ENCODE measurements at regions of chr6 and their contacts with region 1.

Region 1: GRCh38 chr6:40894962-40895799 is 143.8 kb downstream of the UNC5CL start:
- DNase-seq: peak; percentile 43
- ATAC-seq: peak; percentile 36
- H3K4me3 ChIP-seq: no peak overlapping the region
- H3K27ac ChIP-seq: no peak overlapping the region
- H3K4me1 ChIP-seq: peaks cover 89% of the 10 kb centered on the region
- H3K27me3 ChIP-seq: peaks cover 2 to 12% of the 10 kb centered on the region in 2 experiments; a peak in 2 of 5 replicates
- CTCF ChIP-seq: peak; percentile 84
- EP300 ChIP-seq: 0 out of 4 replicates have a peak, but pooled peaks of 1 of the 2 experiments have one; percentile 7
- POLR2A ChIP-seq: no peak
- RAD21 ChIP-seq: peak; percentile 75

Region 2: DNA sequence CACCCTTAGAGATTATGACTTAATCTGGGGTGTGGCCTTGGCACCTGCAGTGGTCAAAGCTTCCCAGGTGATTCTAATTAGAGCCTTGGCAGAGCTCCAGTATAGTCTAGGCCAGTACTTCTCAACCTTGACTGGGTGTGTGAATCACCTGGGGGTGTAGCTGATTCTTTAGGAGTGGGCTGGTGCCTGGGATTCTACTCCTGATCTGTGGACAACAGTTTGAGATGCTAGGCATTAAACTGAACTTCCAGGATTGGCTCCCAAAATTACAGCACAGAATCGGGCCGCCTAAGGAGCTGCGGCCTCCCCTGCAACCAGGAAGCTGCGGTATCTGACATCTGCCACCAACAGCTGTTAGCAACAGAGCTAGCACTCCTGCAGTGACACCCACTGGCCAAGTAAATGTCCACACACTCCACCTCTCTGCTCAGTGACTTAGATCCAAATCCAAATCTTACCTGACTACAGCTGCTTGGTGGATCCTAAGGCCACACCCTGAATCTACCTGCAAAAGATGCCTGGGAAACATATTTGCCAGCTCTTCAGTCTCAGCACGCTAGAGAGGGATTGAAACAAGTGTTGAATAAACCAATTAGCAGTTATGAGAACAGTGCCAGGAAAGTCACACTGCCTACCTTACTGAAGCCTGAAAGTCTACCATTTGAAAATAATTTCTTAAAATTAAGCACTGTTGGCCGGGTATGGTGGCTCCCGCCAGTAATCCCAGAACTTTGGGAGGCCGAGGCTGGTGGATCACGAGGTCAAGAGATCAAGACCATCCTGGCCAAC is 17.2 kb after region 1 on chr6:
- CTCF ChIA-PET with region 1: interaction called, 20 read pairs
- POLR2A ChIA-PET with region 1: no interaction called
- in situ Hi-C with region 1: no loop called
- intact Hi-C with region 1: loop called (anchors 1 kb)
- DNase-seq: peak; percentile 75
- ATAC-seq: peak; percentile 98
- H3K4me3 ChIP-seq: no peak overlapping the region
- H3K27ac ChIP-seq: no peak overlapping the region
- H3K4me1 ChIP-seq: peaks cover 46% of the 10 kb centered on the region
- H3K27me3 ChIP-seq: no peaks in the 10 kb centered on the region
- CTCF ChIP-seq: peak; percentile 98
- EP300 ChIP-seq: no peak
- POLR2A ChIP-seq: no peak
- RAD21 ChIP-seq: peak; percentile 86

Region 3: GRCh38 chr6:40957616-40958492 is 62.7 kb after region 1 on chr6:
- CTCF ChIA-PET with region 1: no interaction called
- POLR2A ChIA-PET with region 1: no interaction called
- in situ Hi-C with region 1: no loop called
- intact Hi-C with region 1: loop called (anchors 5 kb)
- DNase-seq: peak; percentile 88
- ATAC-seq: peak; percentile 84
- H3K4me3 ChIP-seq: peak overlapping the region in 1 of 3 experiments; percentile 4; a peak in 1 of 6 replicates
- H3K27ac ChIP-seq: no peak overlapping the region
- H3K4me1 ChIP-seq: peaks cover 82% of the 10 kb centered on the region
- H3K27me3 ChIP-seq: no peaks in the 10 kb centered on the region
- CTCF ChIP-seq: no peak
- EP300 ChIP-seq: peak in 1 of 2 experiments; percentile 2; a peak in 1 of 4 replicates
- POLR2A ChIP-seq: no peak
- RAD21 ChIP-seq: no peak

Region 4: GRCh38 chr6:40999569-40999968 is 104.4 kb after region 1 on chr6:
- CTCF ChIA-PET with region 1: no interaction called
- POLR2A ChIA-PET with region 1: interaction called, 5 read pairs
- in situ Hi-C with region 1: no loop called
- intact Hi-C with region 1: loop called (anchors 5 kb)
- DNase-seq: peak; percentile 80
- ATAC-seq: peak; percentile 82
- H3K4me3 ChIP-seq: no peak overlapping the region
- H3K27ac ChIP-seq: no peak overlapping the region
- H3K4me1 ChIP-seq: peaks cover 74% of the 10 kb centered on the region
- H3K27me3 ChIP-seq: no peaks in the 10 kb centered on the region
- CTCF ChIP-seq: peak; percentile 89
- EP300 ChIP-seq: peak in 1 of 2 experiments; percentile 6; a peak in 1 of 4 replicates
- POLR2A ChIP-seq: no peak
- RAD21 ChIP-seq: peak; percentile 46; the same call in 1 of the 2 replicates

Region 5: GRCh38 chr6:41021832-41022231 is 126.7 kb after region 1 on chr6:
- CTCF ChIA-PET with region 1: interaction called, 4 read pairs
- POLR2A ChIA-PET with region 1: no interaction called
- in situ Hi-C with region 1: loop called (anchors 5 kb)
- intact Hi-C with region 1: no loop called
- DNase-seq: peak; percentile 71
- ATAC-seq: peak; percentile 93
- H3K4me3 ChIP-seq: no peak overlapping the region
- H3K27ac ChIP-seq: no peak overlapping the region
- H3K4me1 ChIP-seq: 0 out of 2 replicates have a peak, but pooled peaks cover 7% of the 10 kb centered on the region
- H3K27me3 ChIP-seq: no peaks in the 10 kb centered on the region
- CTCF ChIP-seq: peak; percentile 89
- EP300 ChIP-seq: no peak
- POLR2A ChIP-seq: no peak
- RAD21 ChIP-seq: peak; percentile 51; the same call in 1 of the 2 replicates

Region 6: GRCh38 chr6:41027799-41028628 is 132.8 kb after region 1 on chr6:
- CTCF ChIA-PET with region 1: interaction called, 16 read pairs
- POLR2A ChIA-PET with region 1: no interaction called
- in situ Hi-C with region 1: loop called (anchors 5 kb)
- intact Hi-C with region 1: loop called (anchors 1 kb)
- DNase-seq: peak; percentile 47
- ATAC-seq: peak; percentile 95
- H3K4me3 ChIP-seq: peak overlapping the region in 1 of 3 experiments; percentile 45; a peak in 1 of 6 replicates
- H3K27ac ChIP-seq: no peak overlapping the region
- H3K4me1 ChIP-seq: peaks cover 19% of the 10 kb centered on the region
- H3K27me3 ChIP-seq: no peaks in the 10 kb centered on the region
- CTCF ChIP-seq: peak; percentile 99
- EP300 ChIP-seq: no peak
- POLR2A ChIP-seq: no peak
- RAD21 ChIP-seq: peak; percentile 99

Region 7: DNA sequence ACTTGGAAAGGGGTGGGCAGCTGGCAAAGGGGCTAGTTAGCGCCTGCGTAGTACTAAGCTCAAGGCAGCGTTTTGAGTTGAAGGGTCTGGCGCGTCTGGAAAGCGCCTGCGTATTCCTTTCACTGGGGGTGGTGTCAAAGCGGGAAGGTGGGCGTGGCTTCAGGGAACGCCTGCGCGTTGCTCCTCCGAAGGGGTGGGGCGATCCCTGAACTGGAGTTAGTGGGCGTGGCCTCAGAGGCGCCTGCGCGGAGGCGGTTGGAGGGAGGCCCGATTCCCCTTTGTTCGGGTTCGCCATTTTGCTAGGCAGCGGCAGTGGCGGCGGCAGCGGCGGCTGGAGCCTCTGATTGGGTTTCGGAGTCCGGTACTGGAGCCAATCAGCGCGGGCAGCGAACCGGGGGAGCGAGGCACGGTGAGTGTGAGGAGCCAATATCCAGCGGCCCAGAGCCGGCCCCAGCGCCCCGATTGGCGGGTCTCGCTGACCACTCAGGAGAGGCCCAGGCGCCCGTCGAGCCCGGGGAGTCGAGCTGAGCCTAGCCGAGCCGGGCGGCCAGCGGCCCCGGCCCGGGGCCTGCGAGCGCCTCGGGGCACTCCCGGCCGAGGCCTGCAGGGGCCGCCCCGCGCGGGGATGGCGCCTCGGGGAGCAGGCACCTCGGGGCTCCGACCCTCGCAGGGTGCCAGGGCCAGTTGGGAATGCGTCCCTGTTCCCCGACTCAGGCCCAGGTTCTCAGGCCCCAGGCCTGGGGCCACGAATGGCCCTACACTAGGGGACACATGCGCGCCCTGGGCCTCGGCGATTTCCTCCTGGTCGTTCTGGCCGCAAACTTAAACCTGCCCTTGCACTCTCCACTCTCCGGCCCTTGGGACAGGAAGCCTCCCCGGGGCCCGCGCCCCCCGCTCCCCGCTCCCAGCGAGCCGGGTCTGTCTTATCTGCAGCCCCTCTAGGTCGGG is 177.8 kb after region 1 on chr6 and contains the start of gene NFYA:
- CTCF ChIA-PET with region 1: no interaction called
- POLR2A ChIA-PET with region 1: interaction called, 4 read pairs
- in situ Hi-C with region 1: no loop called
- intact Hi-C with region 1: loop called (anchors 2 kb)
- DNase-seq: peak; percentile 99
- ATAC-seq: peak; percentile 90
- H3K4me3 ChIP-seq: peak within 1 kb of the TSS; percentile 97 to 100 (median 98)
- H3K27ac ChIP-seq: peak within 1 kb of the TSS; percentile 97
- H3K4me1 ChIP-seq: peaks cover 43% of the 10 kb centered on the region
- H3K27me3 ChIP-seq: no peaks in the 10 kb centered on the region; a peak in 2 of 5 replicates
- CTCF ChIP-seq: peak; percentile 13; the same call in 1 of the 2 replicates
- EP300 ChIP-seq: no peak
- POLR2A ChIP-seq: peak; percentile 70 to 82
- RAD21 ChIP-seq: peak; percentile 82
- total RNA-seq, gene NFYA: 22.9 and 52.0 TPM in 2 replicates

Measured in HepG2 (cell line).